ENCODE measurements at regions of chr4 and their contacts with region 1.

Region 1: DNA sequence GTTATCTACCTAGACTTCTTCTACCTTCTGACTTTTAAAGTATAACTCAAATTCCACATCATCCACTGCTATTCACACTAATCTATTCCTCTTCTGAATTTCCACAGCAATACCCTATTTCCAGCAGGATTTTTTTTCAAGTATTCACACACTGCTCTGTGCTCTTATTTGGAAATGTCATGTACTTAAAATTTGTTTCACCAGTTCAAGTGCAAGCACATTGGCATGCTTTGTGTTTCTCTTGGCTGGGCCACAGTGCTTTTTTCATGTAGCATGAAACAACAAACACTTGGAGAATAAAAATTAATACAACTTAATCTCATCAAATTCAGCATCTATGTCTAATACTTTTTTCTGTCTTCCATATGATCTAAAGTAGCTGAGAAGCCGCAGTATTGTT is 161.8 kb upstream of the PCDH18 start:
- DNase-seq: peak in 1 of 2 donors; percentile 22
- ATAC-seq: peak in 4 of 8 donors; percentile 35 to 82 (median 46)
- H3K4me3 ChIP-seq: no peak overlapping the region
- H3K27ac ChIP-seq: no peak overlapping the region
- H3K4me1 ChIP-seq: peaks cover 0 to 3% (median 0%) of the 10 kb centered on the region in 9 donors
- H3K27me3 ChIP-seq: no peaks in the 10 kb centered on the region
- CTCF ChIP-seq: no peak

Region 2: DNA sequence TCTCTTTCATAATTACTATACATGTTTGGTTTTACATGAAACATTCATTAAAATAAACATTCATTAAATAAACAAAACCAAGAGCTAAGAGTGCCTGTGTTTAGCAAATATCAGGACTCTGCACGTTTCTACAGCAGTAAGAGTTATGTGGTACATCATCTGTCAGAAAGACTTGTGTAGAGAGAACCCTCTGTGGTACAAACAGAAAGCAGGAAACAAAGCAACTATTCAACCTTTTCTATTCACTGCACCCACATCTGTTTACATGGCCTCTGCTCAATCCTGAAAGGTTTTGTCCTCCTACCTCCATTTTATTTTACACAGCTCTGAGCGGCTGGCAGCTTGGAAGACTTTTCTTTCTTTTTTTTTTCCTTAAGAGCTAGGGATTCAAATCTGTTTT is 71.1 kb before region 1 on chr4:
- intact Hi-C with region 1: loop called in 1 of 10 experiments (anchors 10 kb)
- DNase-seq: no peak
- ATAC-seq: no peak
- H3K4me3 ChIP-seq: no peak overlapping the region
- H3K27ac ChIP-seq: no peak overlapping the region
- H3K4me1 ChIP-seq: peaks cover 0 to 8% (median 0%) of the 10 kb centered on the region in 9 donors
- H3K27me3 ChIP-seq: no peaks in the 10 kb centered on the region
- CTCF ChIP-seq: no peak

Measured in heart right ventricle (tissue), 16 donors.